Colonic mucosa (tissue), 4 donors: ENCODE measurements at regions of chr1 and their contacts with region 1.

Region 1: GRCh38 chr1:9455487-9456234 is 83.6 kb upstream of the SLC25A33 start:
- DNase-seq: peak; percentile 77
- H3K4me3 ChIP-seq: no peak overlapping the region
- H3K27ac ChIP-seq: no peak overlapping the region
- H3K4me1 ChIP-seq: no peaks in the 10 kb centered on the region
- H3K27me3 ChIP-seq: no peaks in the 10 kb centered on the region
- CTCF ChIP-seq: peak; percentile 89

Region 2: GRCh38 chr1:9267352-9267686 is 188.3 kb before region 1 on chr1:
- intact Hi-C with region 1: loop called (anchors 2 kb)
- DNase-seq: no peak
- H3K4me3 ChIP-seq: no peak overlapping the region
- H3K27ac ChIP-seq: no peak overlapping the region
- H3K4me1 ChIP-seq: no peaks in the 10 kb centered on the region
- H3K27me3 ChIP-seq: no peaks in the 10 kb centered on the region
- CTCF ChIP-seq: no peak

Region 3: DNA sequence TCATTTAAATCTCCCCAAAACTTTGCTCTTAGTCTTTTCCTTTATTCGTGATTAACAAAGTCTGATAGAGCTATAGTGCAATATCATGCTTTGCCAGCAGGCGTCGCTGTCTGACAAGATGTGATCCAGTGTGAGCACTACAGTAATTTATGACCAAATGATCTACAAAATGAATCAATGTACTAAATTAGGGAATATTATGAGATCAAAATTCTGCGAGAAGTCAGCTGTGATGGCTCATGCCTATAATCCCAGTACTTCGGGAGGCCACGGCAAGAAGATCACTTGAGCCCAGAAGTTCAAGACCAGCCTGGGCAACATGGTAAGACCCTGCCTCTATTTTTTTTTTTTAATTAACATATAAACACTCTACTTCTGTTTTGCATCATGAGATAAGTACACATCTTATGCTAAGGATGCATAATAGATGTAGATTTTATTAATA is 166.5 kb before region 1 on chr1:
- intact Hi-C with region 1: loop called (anchors 2 kb)
- DNase-seq: peak; percentile 90
- H3K4me3 ChIP-seq: no peak overlapping the region
- H3K27ac ChIP-seq: no peak overlapping the region
- H3K4me1 ChIP-seq: no peaks in the 10 kb centered on the region
- H3K27me3 ChIP-seq: no peaks in the 10 kb centered on the region
- CTCF ChIP-seq: peak; percentile 87

Region 4: DNA sequence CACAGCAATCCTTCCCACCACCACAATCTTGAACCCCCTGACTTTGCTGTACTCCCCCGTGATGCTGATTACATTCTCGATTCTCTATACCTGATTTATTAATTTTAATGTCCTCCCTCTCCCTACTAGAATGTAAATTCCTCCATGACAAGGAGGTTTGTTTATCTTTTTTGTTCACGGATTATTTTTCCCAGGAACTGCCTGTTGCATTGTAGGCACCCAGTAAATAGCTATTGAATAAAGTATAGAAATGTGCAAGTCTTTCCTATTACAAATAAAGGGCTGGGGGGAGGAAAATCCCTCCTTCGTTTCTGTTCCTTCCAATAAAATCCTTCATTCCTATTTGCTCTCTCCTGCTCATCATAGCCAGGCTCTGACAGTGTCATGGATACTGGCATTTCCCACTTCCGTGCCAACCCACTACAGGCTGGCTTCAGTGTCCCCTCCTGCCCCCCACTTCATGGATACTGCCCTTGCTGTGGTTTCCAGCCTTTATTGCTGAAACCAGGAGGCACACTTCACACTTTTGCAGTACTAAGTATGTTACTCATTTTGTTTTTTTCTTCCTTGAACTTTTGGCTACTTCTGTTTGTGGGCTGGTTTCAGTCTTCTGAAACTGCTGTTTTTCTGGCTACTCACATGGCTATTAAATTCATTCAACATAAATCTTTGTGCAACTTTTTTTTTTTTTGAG is 762.2 kb after region 1 on chr1:
- intact Hi-C with region 1: no loop called
- DNase-seq: no peak
- H3K4me3 ChIP-seq: no peak overlapping the region
- H3K27ac ChIP-seq: no peak overlapping the region
- H3K4me1 ChIP-seq: no peaks in the 10 kb centered on the region
- H3K27me3 ChIP-seq: no peaks in the 10 kb centered on the region
- CTCF ChIP-seq: no peak